Common myeloid progenitor, CD34-positive (primary cell): ENCODE measurements at regions of chr18 and their contacts with region 1.

Region 1: DNA sequence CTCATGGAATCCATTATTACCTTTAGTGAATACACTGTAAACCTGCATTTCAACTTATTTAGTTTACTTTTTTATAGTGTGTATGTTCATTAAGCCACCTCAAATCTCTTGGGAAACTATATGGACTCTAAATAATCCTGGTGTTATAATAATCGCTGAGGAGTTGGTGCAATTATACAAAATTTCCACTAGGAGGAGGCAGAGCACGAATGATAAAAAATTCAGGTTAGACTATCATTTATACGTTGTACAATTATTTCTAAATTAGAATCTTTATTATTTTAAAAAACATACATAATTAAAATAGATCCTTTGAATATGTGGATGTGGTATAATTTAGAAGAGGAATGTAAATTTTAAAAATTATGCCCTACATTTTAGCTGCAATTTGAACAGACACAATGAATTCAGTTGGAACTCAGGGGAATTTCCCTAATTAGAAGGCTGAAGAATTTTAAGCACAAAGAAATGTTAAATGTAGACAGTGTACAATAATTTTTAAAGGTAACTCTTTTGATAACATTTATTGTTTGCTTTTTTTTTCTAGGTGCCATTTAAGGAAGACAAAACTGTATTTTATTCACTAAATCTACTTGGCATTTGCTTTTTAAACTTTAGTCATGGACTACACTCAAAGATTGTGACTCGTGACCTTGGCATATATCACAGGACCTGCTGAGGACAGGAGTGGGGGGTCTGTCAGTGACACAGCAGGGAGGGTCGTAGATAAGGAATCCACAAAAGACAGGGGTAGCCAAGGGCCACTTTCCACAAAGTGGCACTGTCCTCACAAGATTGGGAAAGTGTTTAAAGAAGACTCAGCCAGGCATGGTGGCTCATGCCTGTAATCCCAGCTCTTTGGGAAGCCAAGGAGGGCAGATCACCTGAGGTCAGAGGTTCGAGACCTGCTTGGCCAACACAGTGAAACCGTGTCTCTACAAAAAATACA is 45.5 kb downstream of the RAB12 start:
- DNase-seq: peak; percentile 11 to 47 (median 34)
- H3K4me3 ChIP-seq: no peak overlapping the region
- H3K27ac ChIP-seq: no peak overlapping the region
- H3K4me1 ChIP-seq: no peaks in the 10 kb centered on the region
- H3K27me3 ChIP-seq: no peaks in the 10 kb centered on the region

Region 2: GRCh38 chr18:8643326-8643878 is 11.4 kb before region 1 on chr18:
- CTCF ChIA-PET with region 1: interaction called, 10 read pairs
- POLR2A ChIA-PET with region 1: no interaction called
- DNase-seq: no peak
- H3K4me3 ChIP-seq: no peak overlapping the region
- H3K27ac ChIP-seq: no peak overlapping the region
- H3K4me1 ChIP-seq: no peaks in the 10 kb centered on the region
- H3K27me3 ChIP-seq: no peaks in the 10 kb centered on the region

Region 3: DNA sequence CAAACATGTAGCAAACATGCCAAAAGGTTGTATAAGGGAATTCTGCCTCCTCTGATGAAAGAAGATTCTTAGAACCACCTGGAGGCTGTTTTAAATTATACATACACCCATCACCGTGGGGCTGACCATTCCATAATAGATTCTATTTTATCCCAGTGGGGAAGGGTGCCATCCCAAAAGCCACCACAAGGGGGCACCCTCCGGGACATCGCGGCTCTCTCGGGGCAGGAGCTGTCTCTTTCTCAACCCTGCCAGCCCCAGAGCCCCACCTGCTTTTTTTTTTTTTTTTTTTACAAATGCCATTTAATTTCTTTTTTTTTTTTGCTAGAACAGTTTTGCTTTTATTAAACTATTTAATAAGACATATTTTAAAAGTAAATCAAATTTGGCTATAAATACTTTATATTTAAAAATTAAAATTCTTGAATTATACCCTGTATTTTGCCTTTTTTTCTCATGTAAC is 42.0 kb after region 1 on chr18:
- CTCF ChIA-PET with region 1: interaction called, 10 read pairs
- POLR2A ChIA-PET with region 1: no interaction called
- DNase-seq: peak; percentile 56 to 70 (median 69)
- H3K4me3 ChIP-seq: no peak overlapping the region
- H3K27ac ChIP-seq: no peak overlapping the region
- H3K4me1 ChIP-seq: no peaks in the 10 kb centered on the region
- H3K27me3 ChIP-seq: peaks cover 0 to 12% (median 2%) of the 10 kb centered on the region in 5 experiments

Region 4: DNA sequence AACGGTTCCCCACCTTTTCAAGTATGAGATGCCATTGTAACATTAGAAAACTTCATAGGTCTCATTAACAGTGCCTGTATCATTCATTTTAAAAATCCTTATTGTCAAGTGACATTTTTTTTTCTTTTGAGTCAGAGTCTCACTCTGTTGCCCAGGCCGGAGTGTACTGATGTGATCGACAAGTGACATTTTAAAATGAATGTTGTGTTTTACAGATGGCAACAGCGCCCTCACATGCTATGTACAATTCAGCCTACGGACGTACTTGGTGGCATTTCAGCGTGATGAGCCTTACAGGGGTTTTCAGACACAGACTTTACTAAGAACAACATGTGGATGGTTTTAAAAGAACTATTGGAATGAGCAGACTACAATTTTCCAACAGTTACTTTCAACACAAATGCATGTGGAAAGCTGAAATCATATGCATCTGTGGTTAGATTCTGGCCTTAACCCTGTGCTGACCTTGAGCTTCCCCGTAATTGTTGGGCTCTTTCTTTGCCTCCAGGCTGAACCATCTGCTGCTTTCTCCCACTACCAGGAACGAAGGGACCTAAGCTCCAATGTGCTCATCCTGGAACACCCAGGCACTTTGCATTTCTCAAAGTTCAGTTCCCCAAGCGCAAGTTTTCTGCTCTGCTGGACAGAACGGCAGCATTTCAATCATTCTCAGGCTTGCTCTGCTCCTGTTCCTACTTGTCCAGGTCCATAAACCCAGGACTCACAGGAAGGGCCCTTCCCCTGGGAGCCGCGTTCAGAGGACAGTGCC is 327.8 kb after region 1 on chr18:
- CTCF ChIA-PET with region 1: interaction called, 13 read pairs
- POLR2A ChIA-PET with region 1: no interaction called
- DNase-seq: peak; percentile 31 to 41 (median 31)
- H3K4me3 ChIP-seq: no peak overlapping the region
- H3K27ac ChIP-seq: no peak overlapping the region
- H3K4me1 ChIP-seq: no peaks in the 10 kb centered on the region
- H3K27me3 ChIP-seq: peaks cover 0 to 4% (median 0%) of the 10 kb centered on the region in 5 experiments